ENCODE measurements at regions of chr22 and their contacts with region 1.

Region 1: DNA sequence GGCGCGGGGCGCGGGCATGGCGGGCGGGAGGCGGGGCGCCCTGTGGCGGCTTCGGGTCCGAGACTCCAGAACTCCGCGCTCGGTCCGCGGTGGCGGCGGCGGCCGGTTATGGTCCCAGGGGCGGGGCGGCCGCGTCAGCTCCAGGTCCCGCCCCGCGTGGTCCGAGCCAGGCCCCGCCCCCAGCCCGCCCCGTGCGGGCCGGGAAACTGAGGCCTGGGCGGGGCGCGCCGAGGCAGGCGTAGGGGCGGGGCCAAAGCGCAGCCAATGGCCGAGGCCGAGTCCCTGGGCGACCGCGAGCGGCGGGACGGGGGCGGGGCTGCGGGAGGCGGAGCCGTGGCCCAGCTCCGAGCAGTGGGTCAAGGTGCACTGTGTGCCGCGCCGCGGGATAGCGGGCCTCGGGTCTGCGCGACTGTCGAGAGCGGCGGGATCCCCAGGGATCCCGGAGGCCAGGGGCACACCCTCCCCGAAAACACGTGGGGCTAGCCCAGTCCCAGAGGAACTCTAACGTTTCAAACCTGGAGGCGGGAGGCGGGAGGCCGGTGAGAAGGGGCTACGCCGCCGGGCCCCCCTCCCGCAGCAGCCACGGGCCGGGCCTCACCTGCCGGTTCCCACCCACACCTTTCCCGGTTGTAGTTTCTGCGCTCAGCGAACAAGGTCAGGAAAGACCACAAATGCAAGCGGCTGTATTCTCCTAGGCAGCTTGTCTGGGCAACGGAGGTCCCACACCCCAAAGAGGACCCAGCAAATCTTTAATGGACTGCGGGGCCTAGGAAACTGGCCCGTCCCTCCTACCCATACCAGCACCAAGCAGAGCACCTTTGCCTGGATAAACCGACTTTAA is at the start of gene SLC25A1:
- DNase-seq: peak; percentile 89
- ATAC-seq: peak; percentile 66
- H3K4me3 Mint-ChIP-seq: peak within 1 kb of the TSS; percentile 81
- H3K27ac Mint-ChIP-seq: peak within 1 kb of the TSS; percentile 91
- H3K4me1 Mint-ChIP-seq: peaks cover 26% of the 10 kb centered on the region
- H3K27me3 Mint-ChIP-seq: no peaks in the 10 kb centered on the region; the same call in 1 of the 2 replicates
- CTCF ChIP-seq: no peak
- total RNA-seq, gene SLC25A1: 201 to 213 TPM (median 204 TPM) in 3 replicates

Region 2: DNA sequence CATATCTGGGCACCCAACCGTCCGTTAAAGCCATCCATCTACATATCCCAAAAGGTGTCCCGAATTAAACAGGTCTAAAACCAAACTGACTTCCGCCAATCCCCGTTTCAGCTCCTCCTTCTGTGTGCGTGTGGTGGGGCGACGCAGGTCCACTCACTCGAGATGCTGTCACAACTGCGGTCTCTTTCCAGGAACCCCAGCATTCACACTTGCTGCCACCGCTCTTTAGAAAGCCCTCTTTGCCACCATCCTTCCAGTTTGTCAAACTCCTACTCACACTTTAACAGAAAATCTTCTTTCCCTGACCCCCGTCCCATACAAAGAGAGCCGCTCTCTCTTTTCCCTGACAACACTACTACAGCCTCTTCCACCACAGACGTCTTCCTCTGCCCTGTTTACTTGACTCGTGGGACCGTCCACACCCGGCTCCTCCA is 34.9 kb before region 1 on chr22:
- CTCF ChIA-PET with region 1: interaction called, 22 read pairs
- POLR2A ChIA-PET with region 1: interaction called, 4 read pairs
- DNase-seq: no peak
- ATAC-seq: no peak
- H3K4me3 Mint-ChIP-seq: peak overlapping the region; percentile 100
- H3K27ac Mint-ChIP-seq: peak overlapping the region; percentile 94
- H3K4me1 Mint-ChIP-seq: peaks cover 20% of the 10 kb centered on the region
- H3K27me3 Mint-ChIP-seq: peaks cover 36% of the 10 kb centered on the region
- CTCF ChIP-seq: no peak

Region 3: DNA sequence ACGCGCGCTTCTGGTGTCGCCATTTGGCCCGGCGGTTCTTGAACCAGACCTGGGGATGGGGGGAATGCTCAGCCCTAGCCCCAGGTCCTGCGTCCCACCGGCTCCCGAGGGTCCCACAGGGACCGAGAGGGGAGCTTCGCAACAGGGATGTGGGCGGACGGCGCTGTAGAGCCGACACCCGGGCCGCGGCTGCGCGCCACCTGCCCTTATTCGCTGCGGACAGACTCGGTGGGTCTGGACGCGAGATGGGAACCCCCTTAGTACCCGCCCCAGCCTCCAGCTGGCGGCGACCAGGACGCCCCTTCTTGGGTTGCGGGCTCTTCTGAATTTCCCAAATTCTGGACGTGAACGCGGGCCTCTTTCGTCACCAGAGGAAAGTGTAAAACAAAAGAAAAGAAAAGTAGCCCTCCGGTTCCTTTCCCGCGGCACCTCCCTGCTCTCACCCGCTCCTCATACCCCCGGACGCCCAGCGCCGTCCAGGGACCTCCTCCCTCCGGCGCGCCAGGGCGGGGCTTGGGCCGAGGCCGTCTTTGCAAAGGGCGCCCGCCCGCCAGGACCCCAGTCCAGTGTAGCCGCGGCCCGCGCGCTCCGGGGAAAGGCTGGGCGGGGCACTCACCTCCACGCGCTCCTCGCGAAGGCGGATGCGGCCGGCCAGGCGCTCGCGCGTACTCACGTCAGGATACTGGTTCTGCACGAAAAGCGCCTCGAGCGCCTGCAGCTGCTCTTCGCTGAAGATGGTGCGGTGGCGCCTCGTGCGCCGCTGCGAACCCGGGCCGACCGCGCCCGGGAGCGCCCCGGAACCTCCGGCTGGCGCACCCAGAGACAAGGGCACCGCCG is 29.6 kb before region 1 on chr22:
- CTCF ChIA-PET with region 1: interaction called, 22 read pairs
- POLR2A ChIA-PET with region 1: interaction called, 4 read pairs
- DNase-seq: peak; percentile 65
- ATAC-seq: peak; percentile 33
- H3K4me3 Mint-ChIP-seq: peak overlapping the region; percentile 66
- H3K27ac Mint-ChIP-seq: no peak overlapping the region
- H3K4me1 Mint-ChIP-seq: peaks cover 18% of the 10 kb centered on the region
- H3K27me3 Mint-ChIP-seq: peaks cover 78% of the 10 kb centered on the region
- CTCF ChIP-seq: no peak

Region 4: DNA sequence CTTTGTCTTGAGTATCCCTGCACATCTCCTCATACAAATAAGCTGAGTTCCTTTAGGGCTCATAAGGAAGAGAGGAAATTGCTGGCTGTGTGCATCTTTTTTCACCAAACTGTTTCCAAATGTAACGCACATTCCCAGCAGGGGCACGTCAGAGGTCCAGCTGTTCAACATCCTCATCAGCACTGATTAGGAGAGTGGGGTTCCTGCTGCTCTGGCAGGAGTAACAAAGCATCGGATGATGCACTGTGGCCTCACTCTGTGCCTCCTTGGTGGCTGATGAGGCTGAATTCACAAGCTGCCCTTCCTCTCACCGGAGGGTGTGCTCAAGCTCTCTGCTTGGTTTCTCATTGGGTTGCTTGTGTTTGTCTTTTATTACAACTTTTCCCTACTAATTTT is 35.2 kb after region 1 on chr22:
- CTCF ChIA-PET with region 1: interaction called, 14 read pairs
- POLR2A ChIA-PET with region 1: interaction called, 3 read pairs
- DNase-seq: no peak
- ATAC-seq: peak; percentile 55
- H3K4me3 Mint-ChIP-seq: peak overlapping the region; percentile 35
- H3K27ac Mint-ChIP-seq: peak overlapping the region; percentile 84
- H3K4me1 Mint-ChIP-seq: peaks cover 43% of the 10 kb centered on the region
- H3K27me3 Mint-ChIP-seq: no peaks in the 10 kb centered on the region
- CTCF ChIP-seq: no peak

Region 5: GRCh38 chr22:19271856-19272535 is 93.1 kb after region 1 on chr22:
- CTCF ChIA-PET with region 1: interaction called, 10 read pairs
- POLR2A ChIA-PET with region 1: no interaction called
- DNase-seq: no peak
- ATAC-seq: no peak
- H3K4me3 Mint-ChIP-seq: no peak overlapping the region
- H3K27ac Mint-ChIP-seq: no peak overlapping the region
- H3K4me1 Mint-ChIP-seq: no peaks in the 10 kb centered on the region
- H3K27me3 Mint-ChIP-seq: no peaks in the 10 kb centered on the region; the same call in 1 of the 2 replicates
- CTCF ChIP-seq: no peak

Region 6: DNA sequence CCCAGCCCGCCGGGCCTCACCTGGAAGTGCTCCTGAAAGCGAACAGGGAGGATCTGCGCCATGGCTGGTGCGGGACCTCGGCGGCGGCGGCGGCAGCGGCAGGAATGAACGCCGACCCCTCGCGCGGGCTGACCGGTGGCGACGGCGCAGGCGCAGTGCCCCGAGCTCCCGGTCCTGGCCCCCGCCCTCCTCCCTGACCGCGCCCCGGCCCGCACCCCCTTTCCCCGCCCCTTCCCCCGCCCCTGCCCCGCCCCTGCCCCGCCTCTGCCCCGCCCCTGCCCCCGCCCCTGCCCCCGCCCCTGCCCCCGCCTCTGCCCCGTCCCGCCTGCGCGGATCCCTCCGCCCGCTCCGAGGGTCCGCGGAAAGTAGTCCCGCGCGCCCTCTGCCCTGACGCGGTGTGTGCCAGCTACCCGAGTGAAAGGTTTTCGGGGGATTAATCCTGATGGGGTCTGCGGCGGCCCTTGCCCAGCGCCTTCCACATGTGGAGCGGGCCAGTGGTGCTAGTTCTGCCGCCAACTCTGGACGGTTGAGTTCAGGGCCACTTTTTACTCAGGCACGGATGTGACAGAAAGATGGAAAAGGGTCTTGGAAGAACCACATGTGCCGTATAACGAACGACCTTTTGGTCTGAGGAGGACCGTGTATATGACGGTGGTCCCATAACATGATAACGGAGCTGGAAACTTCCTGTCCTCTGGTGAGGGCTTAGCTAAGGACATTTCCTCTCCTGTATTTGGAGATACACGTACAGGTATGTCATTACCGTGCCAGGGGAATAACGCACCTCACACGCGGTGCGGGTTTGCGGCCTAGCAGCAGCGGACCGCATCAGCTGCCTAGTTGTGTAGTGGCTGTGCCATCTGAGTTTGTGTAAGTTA is 112.9 kb after region 1 on chr22 and contains the start of gene CLTCL1:
- CTCF ChIA-PET with region 1: interaction called, 26 read pairs
- POLR2A ChIA-PET with region 1: interaction called, 4 read pairs
- DNase-seq: peak; percentile 84
- ATAC-seq: peak; percentile 74
- H3K4me3 Mint-ChIP-seq: peak within 1 kb of the TSS; percentile 91
- H3K27ac Mint-ChIP-seq: no peak within 1 kb of the TSS
- H3K4me1 Mint-ChIP-seq: peaks cover 24% of the 10 kb centered on the region
- H3K27me3 Mint-ChIP-seq: peaks cover 25% of the 10 kb centered on the region
- CTCF ChIP-seq: no peak
- total RNA-seq, gene CLTCL1: 15.5 to 19.3 TPM (median 16.9 TPM) in 3 replicates

Region 7: DNA sequence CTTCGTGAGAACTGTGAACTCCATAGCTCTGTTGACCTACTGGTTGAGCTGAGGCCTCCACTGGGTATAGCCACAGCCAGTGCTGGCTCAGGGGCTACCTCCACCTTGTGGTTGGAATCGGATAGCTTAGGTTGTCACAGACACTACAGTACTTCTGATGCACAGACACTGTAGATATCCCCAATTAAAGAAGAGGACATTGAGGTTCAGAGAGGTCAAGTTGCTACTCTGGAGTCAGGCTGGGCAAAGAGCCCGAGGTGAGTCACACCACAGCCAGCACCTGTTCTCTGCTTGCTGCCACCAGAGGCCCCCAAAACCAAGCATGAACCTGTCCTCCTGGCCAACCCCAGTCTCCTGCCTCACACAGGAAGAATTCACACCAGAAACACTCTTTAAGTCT is 294.7 kb after region 1 on chr22:
- CTCF ChIA-PET with region 1: interaction called, 25 read pairs
- POLR2A ChIA-PET with region 1: interaction called, 4 read pairs
- DNase-seq: no peak
- ATAC-seq: no peak; the same call in 1 of the 2 replicates
- H3K4me3 Mint-ChIP-seq: no peak overlapping the region
- H3K27ac Mint-ChIP-seq: no peak overlapping the region
- H3K4me1 Mint-ChIP-seq: peaks cover 12% of the 10 kb centered on the region
- H3K27me3 Mint-ChIP-seq: no peaks in the 10 kb centered on the region
- CTCF ChIP-seq: no peak